Pancreas (tissue), 10 donors: ENCODE measurements at regions of chr10 and their contacts with region 1.

Region 1: DNA sequence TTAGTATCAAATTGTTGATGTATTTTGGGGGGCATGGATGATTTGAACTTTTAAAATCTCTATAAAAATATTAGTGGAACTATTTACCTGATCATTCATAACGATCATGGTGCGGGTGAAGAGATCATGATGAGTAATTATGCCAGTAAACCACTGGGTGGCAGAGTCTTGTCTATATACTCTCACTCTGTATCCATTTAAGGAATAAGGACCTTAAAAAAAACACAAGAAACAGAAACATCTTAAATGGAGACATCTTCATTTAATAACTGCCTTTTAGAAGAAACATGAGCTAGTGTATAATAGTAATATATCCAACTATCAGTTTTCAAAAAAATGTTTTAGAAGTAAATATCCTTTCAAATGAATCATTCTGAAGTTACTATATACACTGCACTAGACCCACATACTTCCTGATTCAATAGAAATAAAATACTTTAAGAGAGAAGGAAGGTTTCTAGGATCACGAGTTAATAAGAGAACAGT is 84.0 kb downstream of the NRBF2 start:
- DNase-seq: no peak
- ATAC-seq: peak; percentile 80 to 94 (median 92)
- H3K4me3 ChIP-seq: no peak overlapping the region
- H3K27ac ChIP-seq: no peak overlapping the region
- H3K4me1 ChIP-seq: peaks cover 6 to 14% (median 14%) of the 10 kb centered on the region in 3 donors
- H3K27me3 ChIP-seq: no peaks in the 10 kb centered on the region
- CTCF ChIP-seq: peak; percentile 18 to 53 (median 36)

Region 2: DNA sequence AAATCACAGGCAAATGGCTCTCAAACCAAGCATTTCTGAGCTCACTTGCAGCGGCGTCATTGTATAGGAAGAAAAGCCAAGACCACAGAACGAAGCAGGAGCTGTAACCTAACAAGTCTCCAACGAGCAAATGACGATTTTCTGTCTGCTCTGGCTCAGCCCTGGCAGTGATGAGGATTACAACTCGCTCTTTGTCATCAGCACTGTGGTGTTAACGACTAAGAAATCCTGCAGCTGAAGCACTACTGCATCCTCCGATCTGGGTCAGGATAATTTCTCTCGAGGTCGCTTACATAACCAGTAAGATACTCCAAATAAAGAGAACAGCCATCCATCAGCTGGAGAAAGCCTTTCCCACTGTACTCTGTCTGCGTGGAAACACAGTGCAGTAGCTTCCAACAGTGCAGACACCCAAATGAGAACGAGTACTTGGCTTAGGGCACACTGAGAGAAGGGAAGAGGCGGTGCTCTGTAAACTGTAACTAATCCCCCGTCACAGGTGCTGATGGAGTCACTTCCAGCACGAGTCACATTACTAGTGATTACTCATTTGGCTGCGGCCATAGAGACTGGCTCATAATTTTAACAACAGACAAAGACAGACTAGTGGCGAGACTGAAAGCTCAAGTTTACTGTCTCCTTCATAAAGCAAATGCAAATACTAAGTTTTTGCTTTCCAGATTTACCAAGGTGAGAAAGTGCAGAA is 51.8 kb after region 1 on chr10:
- intact Hi-C with region 1: no loop called
- DNase-seq: peak in 4 of 6 donors; percentile 62 to 90 (median 85)
- ATAC-seq: peak; percentile 89 to 94 (median 92)
- H3K4me3 ChIP-seq: peak overlapping the region; percentile 27 to 56 (median 42)
- H3K27ac ChIP-seq: peak overlapping the region; percentile 89 to 99 (median 96)
- H3K4me1 ChIP-seq: peaks cover 0 to 27% (median 4%) of the 10 kb centered on the region in 3 donors
- H3K27me3 ChIP-seq: no peaks in the 10 kb centered on the region
- CTCF ChIP-seq: peak in 3 of 4 donors; percentile 20 to 34 (median 27)

Region 3: GRCh38 chr10:63614371-63614891 is 397.3 kb after region 1 on chr10:
- intact Hi-C with region 1: loop called in 1 of 3 experiments (anchors 10 kb)
- DNase-seq: no peak
- ATAC-seq: no peak
- H3K4me3 ChIP-seq: no peak overlapping the region
- H3K27ac ChIP-seq: no peak overlapping the region
- H3K4me1 ChIP-seq: no peaks in the 10 kb centered on the region
- H3K27me3 ChIP-seq: no peaks in the 10 kb centered on the region
- CTCF ChIP-seq: no peak